ENCODE measurements at regions of chr2 and their contacts with region 1.

Region 1: GRCh38 chr2:178306352-178307073 is 112.2 kb downstream of the OSBPL6 start:
- DNase-seq: peak; percentile 69 to 73
- H3K4me3 ChIP-seq: no peak overlapping the region
- H3K4me3 Mint-ChIP-seq: no peak overlapping the region
- H3K27ac Mint-ChIP-seq: no peak overlapping the region
- H3K4me1 ChIP-seq: no peaks in the 10 kb centered on the region
- H3K4me1 Mint-ChIP-seq: no peaks in the 10 kb centered on the region
- H3K27me3 ChIP-seq: no peaks in the 10 kb centered on the region
- H3K27me3 Mint-ChIP-seq: no peaks in the 10 kb centered on the region
- CTCF ChIP-seq: peak; percentile 80 to 89

Region 2: GRCh38 chr2:177595126-177595845 is 711.2 kb before region 1 on chr2:
- CTCF ChIA-PET with region 1: no interaction called
- POLR2A ChIA-PET with region 1: no interaction called
- intact Hi-C with region 1: no loop called
- DNase-seq: no peak
- H3K4me3 ChIP-seq: no peak overlapping the region
- H3K4me3 Mint-ChIP-seq: no peak overlapping the region
- H3K27ac Mint-ChIP-seq: no peak overlapping the region
- H3K4me1 ChIP-seq: peaks cover 20% of the 10 kb centered on the region
- H3K4me1 Mint-ChIP-seq: peaks cover 18% of the 10 kb centered on the region
- H3K27me3 ChIP-seq: no peaks in the 10 kb centered on the region
- H3K27me3 Mint-ChIP-seq: no peaks in the 10 kb centered on the region
- CTCF ChIP-seq: no peak

Region 3: GRCh38 chr2:178327516-178327915 is 21.0 kb after region 1 on chr2:
- CTCF ChIA-PET with region 1: no interaction called
- POLR2A ChIA-PET with region 1: no interaction called
- intact Hi-C with region 1: loop called (anchors 1 kb)
- DNase-seq: peak; percentile 46 to 54
- H3K4me3 ChIP-seq: no peak overlapping the region
- H3K4me3 Mint-ChIP-seq: no peak overlapping the region
- H3K27ac Mint-ChIP-seq: no peak overlapping the region
- H3K4me1 ChIP-seq: peaks cover 34% of the 10 kb centered on the region
- H3K4me1 Mint-ChIP-seq: no peaks in the 10 kb centered on the region
- H3K27me3 ChIP-seq: no peaks in the 10 kb centered on the region
- H3K27me3 Mint-ChIP-seq: no peaks in the 10 kb centered on the region
- CTCF ChIP-seq: no peak

Region 4: DNA sequence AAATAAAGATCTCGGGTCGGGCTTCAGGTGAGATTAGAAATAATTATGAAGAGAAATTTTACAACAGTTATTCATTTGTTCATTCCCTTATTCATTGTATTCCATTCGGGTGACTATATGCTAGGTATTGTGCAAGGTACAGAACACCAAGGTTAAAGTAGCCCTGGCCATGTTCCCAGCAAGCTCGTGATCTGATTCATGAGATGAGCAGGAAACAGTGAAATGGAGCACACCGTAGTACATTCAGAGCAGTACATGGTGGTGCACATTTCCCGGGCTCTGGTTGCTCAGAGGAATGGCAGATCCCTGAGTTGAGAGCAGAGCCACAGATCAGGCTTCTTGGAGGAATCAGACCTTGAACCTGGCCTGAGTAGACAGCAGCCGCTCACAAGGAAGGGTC is 56.7 kb after region 1 on chr2:
- CTCF ChIA-PET with region 1: no interaction called
- POLR2A ChIA-PET with region 1: no interaction called
- intact Hi-C with region 1: no loop called
- DNase-seq: no peak
- H3K4me3 ChIP-seq: no peak overlapping the region
- H3K4me3 Mint-ChIP-seq: no peak overlapping the region
- H3K27ac Mint-ChIP-seq: no peak overlapping the region
- H3K4me1 ChIP-seq: no peaks in the 10 kb centered on the region
- H3K4me1 Mint-ChIP-seq: no peaks in the 10 kb centered on the region
- H3K27me3 ChIP-seq: no peaks in the 10 kb centered on the region
- H3K27me3 Mint-ChIP-seq: peaks cover 4% of the 10 kb centered on the region
- CTCF ChIP-seq: no peak

Region 5: GRCh38 chr2:178397002-178397605 is 90.6 kb after region 1 on chr2:
- CTCF ChIA-PET with region 1: no interaction called
- POLR2A ChIA-PET with region 1: no interaction called
- intact Hi-C with region 1: loop called (anchors 2 kb)
- DNase-seq: peak in 1 of 2 experiments; percentile 16
- H3K4me3 ChIP-seq: no peak overlapping the region
- H3K4me3 Mint-ChIP-seq: no peak overlapping the region
- H3K27ac Mint-ChIP-seq: no peak overlapping the region
- H3K4me1 ChIP-seq: peaks cover 7% of the 10 kb centered on the region
- H3K4me1 Mint-ChIP-seq: peaks cover 22% of the 10 kb centered on the region
- H3K27me3 ChIP-seq: no peaks in the 10 kb centered on the region
- H3K27me3 Mint-ChIP-seq: no peaks in the 10 kb centered on the region
- CTCF ChIP-seq: peak; percentile 55 to 56

Measured in Caco-2 (cell line).